ENCODE measurements at regions of chr7 and their contacts with region 1.

Region 1: GRCh38 chr7:48875045-48875916 is 49.1 kb upstream of the CDC14C start:
- DNase-seq: peak; percentile 54
- ATAC-seq: peak; percentile 85

Region 2: DNA sequence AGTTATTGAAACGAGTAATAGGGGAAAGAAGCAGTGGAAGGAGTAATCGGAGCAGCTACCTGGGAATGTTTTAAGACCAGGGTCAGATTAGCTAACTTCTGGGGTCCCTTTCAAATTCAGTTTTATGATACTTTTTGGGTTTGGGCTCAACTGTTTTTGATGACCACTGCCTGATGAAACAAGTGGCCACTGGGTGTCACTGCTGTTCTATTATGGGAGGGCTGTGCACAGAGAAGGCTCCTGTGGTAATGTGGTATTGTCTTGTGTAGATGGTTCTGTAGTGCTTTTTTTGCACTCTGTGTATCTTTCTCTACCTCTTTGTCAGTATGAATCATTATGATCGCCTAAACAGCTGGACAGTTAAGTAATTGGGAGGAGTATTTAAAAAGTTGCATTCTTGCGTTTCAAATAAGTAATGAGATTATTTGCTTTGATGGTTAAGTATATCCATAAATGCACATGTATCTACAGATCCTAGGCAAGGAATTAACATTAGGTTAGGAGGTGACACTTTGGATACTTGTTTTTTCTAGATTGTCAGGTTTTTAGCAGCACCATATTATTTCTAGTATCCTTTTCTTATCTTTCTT is 575.6 kb before region 1 on chr7:
- intact Hi-C with region 1: loop called (anchors 5 kb)
- DNase-seq: no peak
- ATAC-seq: peak; percentile 60

Region 3: DNA sequence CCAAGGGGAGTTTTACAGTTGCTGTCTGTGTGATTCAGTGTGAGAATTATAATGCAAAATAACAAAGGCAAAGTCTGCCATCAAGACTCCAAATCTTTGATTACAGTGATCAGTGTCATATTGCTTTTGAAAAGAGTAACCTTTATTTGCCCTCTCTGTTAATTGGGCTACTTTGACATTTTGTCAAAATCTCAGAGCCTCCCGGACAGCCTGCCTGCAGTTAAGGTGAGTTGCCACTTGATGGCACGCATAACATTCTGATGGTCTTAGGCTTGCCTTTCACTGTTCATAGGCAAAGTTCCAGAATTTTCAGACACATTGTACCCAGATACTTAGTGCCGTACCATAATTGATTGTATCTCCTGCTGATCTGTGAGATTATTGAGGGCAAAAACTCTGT is 450.6 kb before region 1 on chr7:
- intact Hi-C with region 1: loop called (anchors 5 kb)
- DNase-seq: no peak
- ATAC-seq: peak; percentile 49